ENCODE measurements at regions of chr9 and their contacts with region 1.

Region 1: DNA sequence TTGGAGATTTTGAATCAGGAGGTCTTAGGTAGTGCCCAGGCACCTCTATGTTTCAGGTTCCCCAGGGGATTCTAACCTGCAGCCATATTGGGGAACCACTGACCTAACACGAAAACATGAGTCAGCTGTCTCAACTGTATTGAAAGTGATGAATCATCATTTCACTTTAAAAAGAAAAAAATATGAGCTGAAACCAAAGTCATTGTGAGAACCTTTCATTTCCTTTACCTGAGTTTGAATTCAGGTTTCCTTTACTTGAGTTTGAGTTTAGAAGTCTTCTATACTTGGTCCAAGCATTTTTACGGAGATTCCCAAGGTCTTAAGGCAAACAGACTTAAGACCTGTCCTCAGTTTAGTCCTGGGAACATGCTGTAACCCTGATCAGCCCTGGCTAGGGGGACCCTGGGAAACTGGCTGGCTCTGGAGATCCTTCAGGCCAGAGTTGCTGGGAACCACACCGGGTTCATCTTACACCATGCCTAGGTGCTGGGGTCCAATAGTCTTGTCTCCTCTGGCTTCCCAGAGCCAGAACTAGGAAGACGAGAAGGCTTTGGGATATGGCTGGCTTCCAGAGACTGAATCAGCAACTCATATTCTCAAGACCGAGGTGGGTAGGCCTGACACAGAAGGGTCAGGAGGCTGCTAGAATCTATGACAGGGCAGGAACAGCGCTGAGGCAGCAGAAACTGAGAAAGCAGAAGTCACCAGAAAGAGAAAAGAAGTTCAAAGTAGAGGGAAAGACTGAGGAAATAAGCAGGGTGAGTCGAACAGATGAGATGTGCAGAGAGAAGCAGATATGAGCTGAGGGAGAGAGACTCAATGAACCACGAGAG is 16.4 kb upstream of the PDCD1LG2 start:
- DNase-seq: peak; percentile 70
- H3K4me3 Mint-ChIP-seq: peak overlapping the region; percentile 40
- H3K27ac Mint-ChIP-seq: peak overlapping the region; percentile 73
- H3K4me1 Mint-ChIP-seq: peaks cover 15% of the 10 kb centered on the region
- H3K27me3 Mint-ChIP-seq: no peaks in the 10 kb centered on the region

Region 2: DNA sequence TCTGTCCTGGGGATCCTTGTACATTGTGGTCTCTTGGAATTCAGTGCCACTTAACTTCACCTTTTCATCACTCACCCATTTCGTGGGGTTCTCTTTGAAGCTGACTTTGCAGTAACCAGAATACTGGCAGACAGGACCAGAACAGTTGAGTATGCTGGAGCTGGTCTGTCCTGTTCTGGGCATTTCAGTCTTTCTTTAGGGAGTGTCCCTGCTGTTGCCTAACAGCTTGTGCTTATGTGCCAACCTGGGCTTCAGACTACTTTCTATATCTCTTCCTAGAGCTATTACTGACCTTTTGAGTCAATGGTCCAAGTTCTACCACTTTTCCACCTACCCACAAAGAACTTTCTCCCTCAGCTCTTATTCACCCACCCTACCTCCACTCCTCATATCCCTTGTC is 298.4 kb before region 1 on chr9:
- intact Hi-C with region 1: no loop called
- DNase-seq: no peak
- H3K4me3 Mint-ChIP-seq: no peak overlapping the region
- H3K27ac Mint-ChIP-seq: no peak overlapping the region
- H3K4me1 Mint-ChIP-seq: no peaks in the 10 kb centered on the region
- H3K27me3 Mint-ChIP-seq: peaks cover 29% of the 10 kb centered on the region

Region 3: GRCh38 chr9:5416962-5417361 is 76.9 kb before region 1 on chr9:
- intact Hi-C with region 1: no loop called
- DNase-seq: no peak
- H3K4me3 Mint-ChIP-seq: no peak overlapping the region
- H3K27ac Mint-ChIP-seq: no peak overlapping the region
- H3K4me1 Mint-ChIP-seq: peaks cover 8% of the 10 kb centered on the region
- H3K27me3 Mint-ChIP-seq: no peaks in the 10 kb centered on the region

Region 4: DNA sequence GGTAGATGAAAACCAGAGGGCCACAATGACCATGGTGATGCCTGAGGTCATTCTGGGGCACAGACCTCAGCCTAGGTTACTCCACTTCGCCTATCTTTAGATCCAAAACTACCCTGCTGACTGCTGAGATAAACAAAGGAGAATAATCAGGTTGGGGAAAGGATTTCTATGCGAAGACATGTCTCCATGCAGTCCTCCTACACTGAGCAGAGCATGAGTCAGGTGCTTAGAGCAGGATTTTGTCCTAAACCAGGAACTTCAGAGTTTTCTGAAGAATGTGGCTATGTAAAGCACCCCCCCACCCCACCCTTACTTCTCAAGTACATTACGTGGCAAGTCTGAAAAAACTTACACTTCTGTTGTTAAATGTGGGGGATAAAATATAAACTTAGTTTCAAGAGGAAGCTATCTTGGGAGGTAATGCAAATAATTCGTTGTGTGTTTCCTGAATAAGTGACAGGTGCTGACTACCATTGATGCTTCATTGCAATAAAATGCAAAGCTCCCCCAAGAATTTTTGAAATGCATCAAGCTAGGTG is 35.9 kb after region 1 on chr9:
- intact Hi-C with region 1: no loop called
- DNase-seq: no peak
- H3K4me3 Mint-ChIP-seq: no peak overlapping the region
- H3K27ac Mint-ChIP-seq: no peak overlapping the region
- H3K4me1 Mint-ChIP-seq: peaks cover 32% of the 10 kb centered on the region
- H3K27me3 Mint-ChIP-seq: no peaks in the 10 kb centered on the region

Region 5: GRCh38 chr9:5549658-5550310 is 55.9 kb after region 1 on chr9:
- intact Hi-C with region 1: loop called (anchors 10 kb)
- DNase-seq: no peak
- H3K4me3 Mint-ChIP-seq: no peak overlapping the region
- H3K27ac Mint-ChIP-seq: no peak overlapping the region
- H3K4me1 Mint-ChIP-seq: peaks cover 9% of the 10 kb centered on the region
- H3K27me3 Mint-ChIP-seq: no peaks in the 10 kb centered on the region

Measured in activated CD4-positive, alpha-beta T cell treated with anti-CD3 and anti-CD28 coated beads, Interleukin-2, amount 10 ng/mL, durations not matched to agents 24 days and 14 days (primary cell).